ENCODE measurements at regions of chr7 and their contacts with region 1.

Region 1: GRCh38 chr7:99289185-99289584 is 16.5 kb downstream of the MYH16 start:
- DNase-seq: peak in 1 of 42 donors; percentile 31

Region 2: GRCh38 chr7:99171731-99172130 is 117.5 kb before region 1 on chr7:
- intact Hi-C with region 1: loop called (anchors 10 kb)
- DNase-seq: no peak

Measured in head of caudate nucleus (tissue), 42 donors.